HepG2 (cell line): ENCODE measurements at regions of chr11 and their contacts with region 1.

Region 1: DNA sequence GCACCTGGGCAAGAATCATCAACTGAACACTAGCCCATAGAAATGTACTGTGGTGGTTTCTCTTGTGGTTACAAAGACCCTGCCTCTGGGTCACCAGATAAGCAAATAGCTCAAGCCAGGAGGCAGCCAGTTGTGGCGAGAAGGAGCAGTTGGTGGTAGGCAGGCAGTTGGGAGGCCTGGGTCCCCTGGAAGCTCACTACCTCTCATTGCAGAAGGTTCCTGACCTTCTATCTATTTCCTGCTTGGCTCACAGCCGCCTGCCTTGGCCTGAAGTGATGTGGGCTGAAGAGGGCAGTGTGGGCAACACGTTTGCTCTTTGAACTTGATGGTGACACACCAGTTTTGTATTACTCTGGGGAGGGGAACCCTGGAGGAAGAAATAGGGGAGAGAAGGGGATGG is 34.7 kb downstream of the NECTIN1 start:
- DNase-seq: peak; percentile 72
- ATAC-seq: peak; percentile 67
- H3K4me3 ChIP-seq: no peak overlapping the region
- H3K27ac ChIP-seq: no peak overlapping the region
- H3K4me1 ChIP-seq: peaks cover 67% of the 10 kb centered on the region
- H3K27me3 ChIP-seq: no peaks in the 10 kb centered on the region
- CTCF ChIP-seq: peak; percentile 82
- EP300 ChIP-seq: no peak
- POLR2A ChIP-seq: no peak
- RAD21 ChIP-seq: 0 out of 2 replicates have a peak, but pooled peaks have one; percentile 17

Region 2: DNA sequence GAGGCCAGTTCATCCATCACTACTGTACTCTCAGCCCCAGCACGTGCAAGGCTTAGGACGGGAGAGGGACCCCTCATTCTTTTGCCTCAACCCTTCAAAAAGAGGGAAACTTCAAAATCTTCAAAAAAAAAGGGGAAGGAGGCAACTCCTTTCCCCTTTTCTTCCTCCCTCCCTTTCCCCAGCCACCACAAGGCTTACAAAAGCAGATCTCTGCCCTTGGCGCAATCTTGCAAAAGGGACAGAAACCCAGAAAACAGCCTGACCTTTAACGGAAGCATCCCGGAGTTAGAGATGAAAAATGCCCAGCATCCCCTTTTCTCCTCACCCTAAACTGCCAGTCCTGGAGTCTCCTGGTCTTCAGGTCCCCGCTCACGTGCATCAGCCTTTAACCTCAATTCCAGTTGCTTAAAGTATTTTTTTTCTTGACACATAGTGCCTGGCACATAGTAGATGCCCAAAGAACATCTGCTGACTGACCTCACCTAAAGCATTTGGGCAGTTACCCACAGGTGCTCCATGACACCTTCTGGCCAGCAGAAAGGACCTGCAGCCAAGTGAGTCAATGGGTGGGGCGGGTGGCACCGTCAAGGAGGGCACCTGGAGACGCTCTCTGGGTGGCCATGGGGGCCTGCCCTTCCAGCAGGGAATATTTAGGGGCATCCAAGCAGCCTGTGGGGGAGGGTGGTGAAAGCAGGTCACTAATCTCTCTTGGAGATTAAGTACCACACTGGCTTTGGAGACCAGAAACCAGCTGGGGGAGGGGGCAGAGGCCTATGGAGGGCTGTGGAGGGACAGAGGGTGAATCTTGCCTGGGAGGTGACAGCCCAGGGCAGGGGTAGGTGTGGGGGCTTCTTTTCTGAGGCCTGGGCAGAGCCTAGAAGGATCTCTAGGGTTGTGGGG is 18.4 kb after region 1 on chr11:
- CTCF ChIA-PET with region 1: no interaction called
- POLR2A ChIA-PET with region 1: interaction called, 11 read pairs
- in situ Hi-C with region 1: no loop called
- intact Hi-C with region 1: no loop called
- DNase-seq: no peak
- ATAC-seq: peak; percentile 53
- H3K4me3 ChIP-seq: peak overlapping the region; percentile 20 to 63 (median 32); a peak in 4 of 6 replicates
- H3K27ac ChIP-seq: peak overlapping the region; percentile 45
- H3K4me1 ChIP-seq: peaks cover 75% of the 10 kb centered on the region
- H3K27me3 ChIP-seq: no peaks in the 10 kb centered on the region
- CTCF ChIP-seq: 0 out of 2 replicates have a peak, but pooled peaks have one; percentile 10
- EP300 ChIP-seq: no peak
- POLR2A ChIP-seq: peak in 1 of 2 experiments; percentile 42; a peak in 1 of 4 replicates
- RAD21 ChIP-seq: no peak